Mammary epithelial cell (primary cell): ENCODE measurements at regions of chr6 and their contacts with region 1.

Region 1: GRCh38 chr6:11770546-11771466 is 7.8 kb downstream of the ADTRP start:
- DNase-seq: peak; percentile 100
- H3K4me3 ChIP-seq: peak overlapping the region in 2 of 3 experiments; percentile 17 to 27
- H3K27ac ChIP-seq: peak overlapping the region; percentile 99
- H3K4me1 ChIP-seq: peaks cover 75% of the 10 kb centered on the region
- H3K27me3 ChIP-seq: no peaks in the 10 kb centered on the region
- CTCF ChIP-seq: no peak

Region 2: GRCh38 chr6:11653028-11653583 is 117.7 kb before region 1 on chr6:
- CTCF ChIA-PET with region 1: no interaction called
- dilution Hi-C with region 1: no loop called
- in situ Hi-C with region 1: no loop called
- intact Hi-C with region 1: loop called (anchors 1 kb)
- DNase-seq: peak; percentile 60
- H3K4me3 ChIP-seq: no peak overlapping the region
- H3K27ac ChIP-seq: no peak overlapping the region
- H3K4me1 ChIP-seq: peaks cover 8% of the 10 kb centered on the region
- H3K27me3 ChIP-seq: no peaks in the 10 kb centered on the region
- CTCF ChIP-seq: no peak

Region 3: GRCh38 chr6:11700118-11700718 is 70.6 kb before region 1 on chr6:
- CTCF ChIA-PET with region 1: no interaction called
- dilution Hi-C with region 1: no loop called
- in situ Hi-C with region 1: no loop called
- intact Hi-C with region 1: loop called (anchors 1 kb)
- DNase-seq: peak; percentile 29
- H3K4me3 ChIP-seq: no peak overlapping the region
- H3K27ac ChIP-seq: no peak overlapping the region
- H3K4me1 ChIP-seq: peaks cover 14% of the 10 kb centered on the region
- H3K27me3 ChIP-seq: no peaks in the 10 kb centered on the region
- CTCF ChIP-seq: peak; percentile 23 to 58

Region 4: DNA sequence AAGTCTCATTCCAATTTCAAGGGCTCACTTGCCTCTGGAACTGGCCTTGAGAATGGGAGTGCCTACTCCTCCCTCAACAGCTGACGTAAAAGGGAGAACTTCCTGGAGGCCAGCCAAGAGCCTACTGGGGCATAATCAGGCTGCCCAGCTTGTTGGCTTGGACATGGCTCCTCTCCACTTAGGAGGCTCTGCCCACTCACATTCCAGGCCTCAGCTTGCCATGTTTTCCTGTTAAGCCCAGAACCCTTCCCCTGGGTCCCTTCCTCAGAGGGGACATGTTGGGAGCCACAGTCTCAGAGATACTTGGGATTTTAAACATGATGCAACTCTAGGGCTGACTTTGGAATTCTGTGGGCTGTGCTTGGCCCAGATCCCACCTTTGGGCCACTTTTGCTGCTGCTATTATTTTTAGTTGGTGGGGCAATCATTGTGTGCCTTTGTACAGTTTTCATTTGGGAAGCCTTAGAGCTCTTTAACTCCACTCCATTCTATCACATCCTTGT is 39.3 kb after region 1 on chr6:
- CTCF ChIA-PET with region 1: interaction called, 5 read pairs
- dilution Hi-C with region 1: loop called (anchors 5 kb)
- in situ Hi-C with region 1: loop called in 1 of 2 experiments (anchors 5 kb)
- intact Hi-C with region 1: loop called (anchors 1 kb)
- DNase-seq: peak; percentile 90
- H3K4me3 ChIP-seq: no peak overlapping the region
- H3K27ac ChIP-seq: peak overlapping the region; percentile 46
- H3K4me1 ChIP-seq: peaks cover 56% of the 10 kb centered on the region
- H3K27me3 ChIP-seq: no peaks in the 10 kb centered on the region
- CTCF ChIP-seq: no peak

Region 5: GRCh38 chr6:11921017-11921438 is 150.2 kb after region 1 on chr6:
- CTCF ChIA-PET with region 1: no interaction called
- dilution Hi-C with region 1: no loop called
- in situ Hi-C with region 1: no loop called
- intact Hi-C with region 1: loop called (anchors 1 kb)
- DNase-seq: peak; percentile 90
- H3K4me3 ChIP-seq: no peak overlapping the region
- H3K27ac ChIP-seq: peak overlapping the region; percentile 37
- H3K4me1 ChIP-seq: peaks cover 13% of the 10 kb centered on the region
- H3K27me3 ChIP-seq: no peaks in the 10 kb centered on the region
- CTCF ChIP-seq: no peak

Region 6: GRCh38 chr6:12233693-12234571 is 463.1 kb after region 1 on chr6:
- CTCF ChIA-PET with region 1: no interaction called
- dilution Hi-C with region 1: no loop called
- in situ Hi-C with region 1: no loop called
- intact Hi-C with region 1: loop called (anchors 10 kb)
- DNase-seq: peak; percentile 82
- H3K4me3 ChIP-seq: no peak overlapping the region
- H3K27ac ChIP-seq: no peak overlapping the region
- H3K4me1 ChIP-seq: peaks cover 5% of the 10 kb centered on the region
- H3K27me3 ChIP-seq: no peaks in the 10 kb centered on the region
- CTCF ChIP-seq: peak; percentile 74 to 84